HEK293 (cell line): ENCODE measurements at regions of chr12 and their contacts with region 1.

Region 1: GRCh38 chr12:20220339-20220738 is 148.0 kb upstream of the PDE3A start:
- H3K4me3 ChIP-seq: no peak overlapping the region
- H3K27ac ChIP-seq: no peak overlapping the region
- H3K4me1 ChIP-seq: no peaks in the 10 kb centered on the region
- CTCF ChIP-seq: no peak

Region 2: DNA sequence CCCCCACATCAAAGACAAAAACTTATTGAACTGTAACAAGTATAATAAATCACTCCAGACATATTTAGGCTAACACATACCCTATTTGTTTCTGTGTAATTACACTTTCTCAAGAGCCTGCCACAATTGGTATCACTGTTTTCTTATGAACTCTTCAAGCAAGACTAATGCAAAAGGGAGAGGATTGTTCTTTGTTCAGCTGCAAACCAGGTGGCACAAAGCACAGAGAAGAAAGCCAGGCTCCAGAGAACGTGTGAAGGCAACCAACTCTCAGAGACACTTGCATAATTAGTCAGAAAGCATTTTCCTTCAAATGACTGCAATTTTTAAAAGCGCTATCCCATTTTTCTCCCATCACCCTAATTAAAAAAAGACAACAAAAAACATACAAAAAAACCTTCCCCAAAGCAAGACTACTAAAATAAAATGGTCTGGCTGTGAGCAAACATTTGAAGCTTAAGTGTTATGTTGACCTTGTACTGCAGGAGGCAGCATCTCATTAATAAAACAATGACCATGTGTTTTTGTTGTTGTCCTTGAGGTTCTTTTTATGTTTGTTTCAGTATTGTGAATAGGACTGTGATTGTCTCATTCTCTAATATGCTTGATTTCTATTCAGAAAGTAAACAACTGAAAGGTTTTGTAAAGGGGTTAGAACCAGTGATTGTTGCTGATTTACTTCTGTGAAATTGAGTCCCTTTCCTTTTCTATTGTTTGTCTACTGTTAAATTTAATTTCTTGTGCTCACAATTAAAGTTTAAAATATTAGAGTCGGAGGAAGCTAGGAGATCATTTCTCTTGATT is 304.7 kb before region 1 on chr12:
- CTCF ChIA-PET with region 1: interaction called, 17 read pairs
- POLR2A ChIA-PET with region 1: no interaction called
- H3K4me3 ChIP-seq: no peak overlapping the region
- H3K27ac ChIP-seq: no peak overlapping the region
- H3K4me1 ChIP-seq: no peaks in the 10 kb centered on the region
- CTCF ChIP-seq: no peak

Region 3: GRCh38 chr12:20134652-20135051 is 85.7 kb before region 1 on chr12:
- CTCF ChIA-PET with region 1: no interaction called
- POLR2A ChIA-PET with region 1: no interaction called
- H3K4me3 ChIP-seq: no peak overlapping the region
- H3K27ac ChIP-seq: no peak overlapping the region
- H3K4me1 ChIP-seq: no peaks in the 10 kb centered on the region
- CTCF ChIP-seq: no peak

Region 4: GRCh38 chr12:20248646-20249045 is 28.3 kb after region 1 on chr12:
- CTCF ChIA-PET with region 1: no interaction called
- POLR2A ChIA-PET with region 1: no interaction called
- H3K4me3 ChIP-seq: no peak overlapping the region
- H3K27ac ChIP-seq: no peak overlapping the region
- H3K4me1 ChIP-seq: no peaks in the 10 kb centered on the region
- CTCF ChIP-seq: no peak